ENCODE measurements at regions of chr3 and their contacts with region 1.

Region 1: GRCh38 chr3:125357032-125357658 is 18.0 kb downstream of the ZNF148 start:
- DNase-seq: peak; percentile 80
- ATAC-seq: peak; percentile 95
- H3K4me3 Mint-ChIP-seq: peak overlapping the region; percentile 74
- H3K27ac Mint-ChIP-seq: peak overlapping the region; percentile 84
- H3K4me1 Mint-ChIP-seq: peaks cover 60% of the 10 kb centered on the region
- H3K27me3 Mint-ChIP-seq: no peaks in the 10 kb centered on the region

Region 2: GRCh38 chr3:125300416-125300815 is 56.7 kb before region 1 on chr3:
- CTCF ChIA-PET with region 1: no interaction called
- POLR2A ChIA-PET with region 1: no interaction called
- intact Hi-C with region 1: no loop called
- DNase-seq: no peak
- ATAC-seq: no peak
- H3K4me3 Mint-ChIP-seq: no peak overlapping the region
- H3K27ac Mint-ChIP-seq: no peak overlapping the region
- H3K4me1 Mint-ChIP-seq: peaks cover 25% of the 10 kb centered on the region
- H3K27me3 Mint-ChIP-seq: no peaks in the 10 kb centered on the region

Region 3: DNA sequence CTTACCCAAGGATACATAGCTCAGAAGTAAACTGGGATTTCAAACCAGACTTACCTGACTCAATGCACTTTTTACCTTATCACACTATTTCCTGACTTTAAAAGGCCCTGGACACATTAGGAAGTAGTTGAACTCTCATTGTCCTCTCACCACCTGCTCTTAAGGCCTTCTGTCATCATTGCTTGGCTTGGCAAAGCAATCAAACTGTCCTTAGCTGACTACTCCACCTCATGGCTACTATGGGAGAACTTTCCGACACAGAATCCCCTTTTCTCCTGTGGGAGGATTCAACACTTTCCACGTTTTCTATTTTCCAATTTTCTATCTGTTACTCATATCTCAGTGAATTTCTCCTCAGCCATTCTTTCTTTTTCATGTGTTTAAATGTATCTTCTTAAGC is 37.4 kb before region 1 on chr3:
- CTCF ChIA-PET with region 1: no interaction called
- POLR2A ChIA-PET with region 1: no interaction called
- intact Hi-C with region 1: loop called (anchors 2 to 5 kb)
- DNase-seq: no peak
- ATAC-seq: no peak
- H3K4me3 Mint-ChIP-seq: no peak overlapping the region
- H3K27ac Mint-ChIP-seq: no peak overlapping the region
- H3K4me1 Mint-ChIP-seq: peaks cover 21% of the 10 kb centered on the region
- H3K27me3 Mint-ChIP-seq: no peaks in the 10 kb centered on the region

Region 4: GRCh38 chr3:125512135-125512920 is 155.2 kb after region 1 on chr3:
- CTCF ChIA-PET with region 1: no interaction called
- POLR2A ChIA-PET with region 1: no interaction called
- intact Hi-C with region 1: loop called in 1 of 2 experiments (anchors 5 kb)
- DNase-seq: peak; percentile 64
- ATAC-seq: peak; percentile 92
- H3K4me3 Mint-ChIP-seq: no peak overlapping the region
- H3K27ac Mint-ChIP-seq: peak overlapping the region; percentile 67
- H3K4me1 Mint-ChIP-seq: peaks cover 49% of the 10 kb centered on the region
- H3K27me3 Mint-ChIP-seq: no peaks in the 10 kb centered on the region

Measured in activated CD4-positive, alpha-beta T cell treated with anti-CD3 and anti-CD28 coated beads for 36 hours (primary cell).